Right ventricle myocardium inferior (tissue), 1 donor: ENCODE measurements at regions of chr16 and their contacts with region 1.

Region 1: GRCh38 chr16:88437373-88437964 is 15.6 kb upstream of the ZFPM1 start:
- DNase-seq: no peak
- ATAC-seq: no peak

Region 2: DNA sequence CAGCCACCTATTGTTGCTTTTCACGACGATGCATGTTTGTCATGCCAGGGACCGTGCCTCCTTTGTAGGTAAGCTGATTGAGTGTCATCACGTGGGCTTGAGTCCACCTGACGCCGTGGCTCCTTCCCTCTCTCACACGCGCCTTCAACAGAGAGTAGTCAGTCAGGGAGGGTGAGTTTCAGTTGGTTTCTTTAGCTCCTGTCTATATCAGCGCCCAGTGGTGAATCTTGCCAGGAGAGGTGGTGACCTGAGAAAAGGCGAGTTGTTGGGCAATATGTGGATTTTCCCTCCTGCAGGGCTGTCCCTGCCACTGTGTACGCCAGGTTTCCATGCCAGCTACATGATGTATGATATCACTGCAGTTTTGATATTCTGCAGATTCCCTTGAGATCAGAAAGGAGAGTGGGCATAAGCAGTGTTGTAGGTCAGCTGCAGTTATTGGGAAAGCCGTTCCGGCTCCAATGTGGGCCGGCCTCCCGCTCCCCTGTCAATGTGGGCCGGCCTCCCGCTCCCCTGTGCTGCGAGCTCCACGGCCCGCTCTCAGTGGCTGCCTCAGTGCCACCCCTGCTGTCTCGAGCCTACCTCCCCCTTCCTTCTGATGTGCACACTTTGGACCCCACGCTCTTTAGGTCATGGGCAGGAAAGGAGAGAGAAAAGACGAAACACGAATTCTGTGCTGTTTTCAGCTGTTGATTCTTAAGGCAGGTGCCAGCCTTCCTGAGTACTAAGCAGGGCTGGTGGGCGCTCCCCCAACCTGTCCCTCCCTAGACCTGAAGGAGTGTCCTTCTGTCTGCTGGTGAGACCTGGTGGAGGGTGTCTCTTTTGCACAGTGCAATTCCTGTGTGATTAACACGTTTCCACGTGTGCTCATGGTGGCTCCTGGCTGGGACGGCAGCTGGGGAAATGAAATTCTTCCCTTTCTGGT is 454.7 kb before region 1 on chr16:
- intact Hi-C with region 1: loop called (anchors 10 kb)
- DNase-seq: no peak
- ATAC-seq: no peak

Region 3: GRCh38 chr16:88192612-88193011 is 244.9 kb before region 1 on chr16:
- intact Hi-C with region 1: loop called (anchors 2 kb)
- DNase-seq: no peak
- ATAC-seq: no peak

Region 4: DNA sequence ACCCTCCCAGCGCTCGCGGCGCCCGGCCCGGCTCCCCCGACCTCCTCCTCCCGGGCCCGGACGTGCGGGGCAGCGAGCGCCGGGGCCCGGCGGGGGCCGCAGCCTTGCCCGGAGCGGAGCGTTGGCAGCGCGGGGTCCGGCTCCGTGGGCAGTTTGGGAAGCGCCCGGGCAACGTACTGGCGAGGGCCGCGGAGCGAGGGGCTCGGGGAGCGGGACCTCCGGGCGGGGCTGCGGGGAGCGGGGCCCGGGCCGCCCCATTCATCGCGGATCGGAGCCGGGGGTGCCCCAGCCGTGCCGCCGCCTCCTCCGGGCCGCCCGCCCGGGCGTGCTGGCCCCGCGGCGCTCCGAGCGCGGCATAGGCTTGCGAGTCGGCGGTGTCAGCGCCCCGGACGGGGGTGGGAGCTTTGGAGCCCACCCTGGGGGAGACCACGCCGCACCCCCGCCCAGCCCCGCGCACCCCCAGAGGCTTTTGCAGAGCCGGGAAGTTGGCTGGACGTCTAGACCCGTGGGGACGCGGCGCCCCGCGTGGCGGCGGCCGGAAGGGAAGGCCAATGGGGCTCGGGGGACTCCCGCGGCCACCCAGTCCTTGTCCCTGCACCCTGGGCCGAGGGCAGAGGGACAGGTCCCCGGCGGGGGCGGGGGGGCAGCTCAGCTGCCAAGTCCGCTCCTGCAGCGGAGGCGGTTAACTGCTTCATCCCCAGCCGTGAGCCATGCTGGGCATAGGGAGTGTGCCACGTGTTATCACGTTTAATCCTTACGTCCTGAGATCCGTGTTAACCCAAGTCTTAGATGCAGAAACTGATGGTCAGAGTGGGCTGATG is 53.9 kb before region 1 on chr16:
- intact Hi-C with region 1: no loop called
- DNase-seq: peak; percentile 72
- ATAC-seq: peak; percentile 37

Region 5: DNA sequence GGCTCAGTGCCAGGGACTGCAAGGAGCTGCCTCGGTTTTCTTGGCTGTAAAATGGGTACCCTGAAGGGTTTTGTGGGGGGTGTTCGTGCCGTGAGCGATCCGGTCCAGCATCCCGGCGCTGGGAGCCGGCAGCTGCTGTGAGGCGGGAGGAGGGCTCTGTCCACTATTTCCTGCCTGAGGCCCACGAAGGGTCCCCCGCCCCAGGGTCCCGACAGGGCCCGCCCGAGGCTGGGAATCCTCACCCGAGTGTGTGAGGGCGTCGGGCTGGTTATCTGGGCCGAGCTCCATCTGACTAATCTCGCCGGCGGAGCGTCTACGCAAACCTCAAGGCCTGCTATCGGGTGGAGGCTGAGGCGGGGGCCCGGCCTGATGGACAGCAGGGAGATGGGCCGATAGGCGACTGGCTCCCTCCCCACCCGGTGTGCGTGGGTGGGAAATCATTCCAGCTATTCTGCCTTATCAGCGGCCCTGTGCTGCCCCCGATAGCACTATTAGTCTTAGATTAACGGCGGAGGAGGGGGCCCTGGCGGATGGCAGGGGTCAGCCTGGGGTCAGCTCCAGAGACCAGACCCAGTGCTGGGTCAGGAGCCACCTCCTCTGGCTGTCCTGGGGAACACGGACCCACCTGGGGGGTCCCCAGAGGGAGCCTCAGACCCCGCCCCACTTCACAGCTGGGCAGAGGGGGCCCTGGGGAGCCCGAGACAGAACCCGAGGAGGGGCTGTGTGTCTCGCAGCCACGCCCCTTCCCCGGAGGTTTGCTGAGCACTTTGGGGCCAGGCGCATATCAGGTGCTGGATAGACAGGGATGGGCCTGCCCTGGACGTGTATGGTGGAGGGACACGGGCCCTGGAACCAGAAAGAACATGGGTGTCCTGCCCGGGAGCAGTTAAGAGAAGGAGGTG is 60.3 kb after region 1 on chr16:
- intact Hi-C with region 1: no loop called
- DNase-seq: no peak
- ATAC-seq: no peak